PC-9 (cell line): ENCODE measurements at regions of chr17 and their contacts with region 1.

Region 1: GRCh38 chr17:7767405-7768021 is 50.0 kb downstream of the DNAH2 start:
- DNase-seq: peak; percentile 78 to 88
- H3K4me3 ChIP-seq: peak overlapping the region; percentile 73
- H3K27ac ChIP-seq: peak overlapping the region; percentile 91
- H3K4me1 ChIP-seq: peaks cover 48% of the 10 kb centered on the region
- H3K27me3 ChIP-seq: no peaks in the 10 kb centered on the region
- CTCF ChIP-seq: 0 out of 2 replicates have a peak, but pooled peaks have one; percentile 23

Region 2: DNA sequence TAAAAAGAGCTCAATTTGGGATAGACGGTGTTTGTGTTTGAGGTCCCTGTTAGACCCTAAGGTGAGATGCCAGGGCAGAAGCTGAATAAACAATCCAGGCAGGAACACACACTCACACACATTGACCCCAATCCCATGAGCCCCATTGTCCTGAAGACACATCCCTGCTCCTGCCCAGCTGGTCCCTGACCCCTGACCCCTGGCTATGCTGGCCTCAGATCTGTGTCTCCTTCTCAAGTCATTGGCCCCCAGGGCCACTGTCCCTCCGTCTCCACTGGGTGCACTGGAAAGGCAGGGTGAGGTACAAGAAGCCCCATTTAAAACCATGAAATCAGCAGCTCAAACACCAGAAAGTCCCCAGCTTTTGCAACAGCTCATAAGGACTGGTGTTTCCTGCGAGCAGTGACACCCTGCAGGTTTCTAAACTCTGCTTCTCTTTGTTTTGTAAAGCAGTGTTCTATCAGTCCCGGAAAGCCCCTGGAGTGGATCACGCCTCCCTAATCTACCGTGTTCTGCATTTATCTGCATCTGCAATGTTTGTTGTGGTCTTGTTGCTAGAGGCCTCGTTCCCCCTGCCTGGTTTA is 634.9 kb before region 1 on chr17:
- CTCF ChIA-PET with region 1: no interaction called
- POLR2A ChIA-PET with region 1: no interaction called
- intact Hi-C with region 1: no loop called
- DNase-seq: no peak
- H3K4me3 ChIP-seq: no peak overlapping the region
- H3K27ac ChIP-seq: no peak overlapping the region
- H3K4me1 ChIP-seq: no peaks in the 10 kb centered on the region
- H3K27me3 ChIP-seq: no peaks in the 10 kb centered on the region
- CTCF ChIP-seq: no peak

Region 3: DNA sequence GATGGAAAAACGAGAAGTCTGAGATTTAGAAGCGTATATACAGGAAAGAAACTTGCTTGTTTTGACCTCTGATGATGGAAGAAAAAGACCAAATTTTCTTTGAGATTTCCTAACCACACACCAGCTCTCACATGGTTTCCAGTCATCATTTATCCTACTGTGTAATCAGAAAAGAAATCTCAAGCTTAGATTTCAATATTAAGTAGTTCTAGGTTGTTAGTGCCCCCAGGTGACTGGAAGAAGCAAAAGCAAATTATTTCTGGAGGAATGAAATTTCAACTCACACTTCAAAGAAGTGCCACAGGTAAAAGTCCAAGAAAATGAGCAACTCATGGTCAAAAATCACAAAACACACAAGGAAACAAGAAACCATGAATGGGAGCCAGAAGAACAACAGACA is 14.7 kb after region 1 on chr17:
- CTCF ChIA-PET with region 1: interaction called, 14 read pairs
- POLR2A ChIA-PET with region 1: no interaction called
- intact Hi-C with region 1: no loop called
- DNase-seq: peak in 1 of 2 experiments; percentile 42
- H3K4me3 ChIP-seq: no peak overlapping the region
- H3K27ac ChIP-seq: no peak overlapping the region
- H3K4me1 ChIP-seq: no peaks in the 10 kb centered on the region
- H3K27me3 ChIP-seq: no peaks in the 10 kb centered on the region
- CTCF ChIP-seq: peak; percentile 56

Region 4: GRCh38 chr17:7809086-7809790 is 41.7 kb after region 1 on chr17:
- CTCF ChIA-PET with region 1: no interaction called
- POLR2A ChIA-PET with region 1: interaction called, 15 read pairs
- intact Hi-C with region 1: loop called (anchors 5 kb)
- DNase-seq: peak; percentile 48 to 87
- H3K4me3 ChIP-seq: peak overlapping the region; percentile 39; the same call in 1 of the 2 replicates
- H3K27ac ChIP-seq: peak overlapping the region; percentile 95
- H3K4me1 ChIP-seq: peaks cover 43% of the 10 kb centered on the region
- H3K27me3 ChIP-seq: no peaks in the 10 kb centered on the region
- CTCF ChIP-seq: no peak

Region 5: GRCh38 chr17:7834962-7835813 is 67.7 kb after region 1 on chr17:
- CTCF ChIA-PET with region 1: interaction called, 15 read pairs
- POLR2A ChIA-PET with region 1: interaction called, 31 read pairs
- intact Hi-C with region 1: no loop called
- DNase-seq: peak; percentile 84 to 96
- H3K4me3 ChIP-seq: peak overlapping the region; percentile 82
- H3K27ac ChIP-seq: 0 out of 2 replicates have a peak overlapping the region, but pooled peaks have one; percentile 23
- H3K4me1 ChIP-seq: peaks cover 18% of the 10 kb centered on the region
- H3K27me3 ChIP-seq: no peaks in the 10 kb centered on the region
- CTCF ChIP-seq: peak; percentile 63; the same call in 1 of the 2 replicates